ENCODE measurements at regions of chr12 and their contacts with region 1.

Region 1: GRCh38 chr12:4392223-4392742 is 12.8 kb upstream of the FGF23 start:
- DNase-seq: no peak

Region 2: GRCh38 chr12:4432878-4433739 is 40.8 kb after region 1 on chr12:
- intact Hi-C with region 1: loop called in 1 of 2 experiments (anchors 1 kb)
- DNase-seq: no peak

Measured in posterior vena cava (tissue), 2 donors.